ENCODE measurements at regions of chr20 and their contacts with region 1.

Region 1: GRCh38 chr20:35680452-35681183 is 15.9 kb upstream of the CPNE1 start:
- DNase-seq: no peak
- H3K4me3 ChIP-seq: no peak overlapping the region
- H3K27ac ChIP-seq: no peak overlapping the region
- H3K4me1 ChIP-seq: no peaks in the 10 kb centered on the region
- H3K27me3 ChIP-seq: no peaks in the 10 kb centered on the region
- CTCF ChIP-seq: no peak
- EP300 ChIP-seq: no peak
- POLR2A ChIP-seq: no peak

Region 2: DNA sequence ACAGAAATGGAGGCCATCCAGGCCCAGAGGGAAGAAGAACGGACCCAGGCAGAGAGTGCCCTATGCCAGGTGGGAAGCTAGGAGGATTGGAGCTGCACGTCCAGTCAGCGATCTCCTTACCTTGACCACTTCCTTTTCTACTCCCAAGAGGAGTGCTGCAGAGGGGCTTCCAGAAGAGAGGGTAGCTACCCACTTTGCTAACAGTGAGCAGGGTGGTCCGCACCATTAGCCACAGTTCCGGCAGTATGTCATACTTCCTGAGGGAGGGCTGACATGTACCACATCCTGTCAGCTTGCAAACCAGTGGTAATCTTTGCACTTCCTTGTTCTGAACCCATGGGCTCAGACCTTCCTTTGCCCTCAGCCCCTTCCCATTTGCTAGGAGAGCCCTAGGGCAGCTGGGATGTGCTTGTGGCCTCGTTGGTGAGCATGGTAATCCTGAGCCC is 189.9 kb before region 1 on chr20:
- intact Hi-C with region 1: no loop called
- DNase-seq: no peak
- H3K4me3 ChIP-seq: no peak overlapping the region
- H3K27ac ChIP-seq: no peak overlapping the region
- H3K4me1 ChIP-seq: no peaks in the 10 kb centered on the region
- H3K27me3 ChIP-seq: no peaks in the 10 kb centered on the region
- CTCF ChIP-seq: no peak
- EP300 ChIP-seq: no peak
- POLR2A ChIP-seq: no peak

Region 3: GRCh38 chr20:36684747-36685146 is 1004.1 kb after region 1 on chr20:
- intact Hi-C with region 1: loop called in 1 of 4 experiments (anchors 5 kb)
- DNase-seq: no peak
- H3K4me3 ChIP-seq: no peak overlapping the region
- H3K27ac ChIP-seq: no peak overlapping the region
- H3K4me1 ChIP-seq: no peaks in the 10 kb centered on the region
- H3K27me3 ChIP-seq: no peaks in the 10 kb centered on the region
- CTCF ChIP-seq: no peak
- EP300 ChIP-seq: no peak
- POLR2A ChIP-seq: no peak

Measured in ovary (tissue), 10 donors.